Left cardiac atrium (tissue), 4 donors: ENCODE measurements at regions of chr12 and their contacts with region 1.

Region 1: GRCh38 chr12:65986047-65986446 is 144.5 kb downstream of the LLPH start:
- DNase-seq: no peak
- ATAC-seq: no peak

Region 2: DNA sequence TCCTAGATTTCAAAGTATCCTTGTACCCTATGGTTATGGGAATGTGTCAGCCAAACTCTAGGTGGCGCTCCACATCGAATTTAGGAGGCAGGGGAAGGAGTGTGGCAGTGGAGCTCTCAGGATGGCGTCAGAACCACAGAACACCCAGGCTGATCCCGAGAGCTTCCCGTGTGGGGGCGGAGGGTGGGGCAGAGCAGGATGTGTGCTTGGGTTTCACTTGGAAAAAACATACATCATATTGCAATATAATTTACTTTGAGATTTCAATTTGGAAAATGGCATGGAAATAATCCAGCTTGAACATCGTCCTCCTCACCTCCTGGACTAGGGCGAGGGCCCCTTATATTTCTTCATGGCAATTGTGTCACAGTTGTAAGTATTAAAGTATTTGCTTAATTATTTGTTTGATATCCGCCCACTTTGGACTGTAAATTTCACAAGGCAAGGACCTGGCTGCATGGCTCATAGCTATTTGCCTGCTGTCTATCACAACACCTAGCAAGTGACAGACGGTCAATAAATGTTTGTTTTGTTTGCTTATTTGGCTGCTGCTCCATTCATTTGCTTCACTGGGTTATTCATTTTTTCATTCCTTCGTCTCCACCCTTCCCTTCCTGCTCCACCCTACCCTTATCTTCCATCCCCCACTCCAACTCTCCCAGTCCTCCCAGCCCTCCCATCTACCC is 383.3 kb before region 1 on chr12:
- intact Hi-C with region 1: loop called in 1 of 2 experiments (anchors 5 kb)
- DNase-seq: peak; percentile 85
- ATAC-seq: peak; percentile 94 to 98